H1 (cell line): ENCODE measurements at regions of chr19 and their contacts with region 1.

Region 1: GRCh38 chr19:13093407-13094105 is 9.1 kb downstream of the LYL1 start:
- DNase-seq: peak; percentile 79 to 89
- H3K4me3 ChIP-seq: no peak overlapping the region
- H3K27ac ChIP-seq: no peak overlapping the region
- H3K4me1 ChIP-seq: peaks cover 0 to 18% (median 16%) of the 10 kb centered on the region in 4 experiments; a peak in 5 of 7 replicates
- H3K27me3 ChIP-seq: peaks cover 9 to 71% (median 45%) of the 10 kb centered on the region in 4 experiments
- CTCF ChIP-seq: peak; percentile 96
- EP300 ChIP-seq: no peak
- POLR2A ChIP-seq: no peak
- RAD21 ChIP-seq: peak; percentile 99

Region 2: GRCh38 chr19:12994701-12995595 is 98.6 kb before region 1 on chr19 and contains the start of gene NFIX:
- CTCF ChIA-PET with region 1: interaction called, 18 read pairs
- POLR2A ChIA-PET with region 1: no interaction called
- DNase-seq: no peak
- H3K4me3 ChIP-seq: peak within 1 kb of the TSS; percentile 21 to 50 (median 30); a peak in 7 of 8 replicates
- H3K27ac ChIP-seq: no peak within 1 kb of the TSS
- H3K4me1 ChIP-seq: peaks cover 0 to 12% (median 8%) of the 10 kb centered on the region in 4 experiments; a peak in 5 of 7 replicates
- H3K27me3 ChIP-seq: peaks cover 53 to 89% (median 82%) of the 10 kb centered on the region in 4 experiments
- CTCF ChIP-seq: no peak
- EP300 ChIP-seq: no peak
- POLR2A ChIP-seq: no peak
- RAD21 ChIP-seq: no peak
- total RNA-seq, gene NFIX: 0.20 and 0.27 TPM in 2 replicates

Region 3: DNA sequence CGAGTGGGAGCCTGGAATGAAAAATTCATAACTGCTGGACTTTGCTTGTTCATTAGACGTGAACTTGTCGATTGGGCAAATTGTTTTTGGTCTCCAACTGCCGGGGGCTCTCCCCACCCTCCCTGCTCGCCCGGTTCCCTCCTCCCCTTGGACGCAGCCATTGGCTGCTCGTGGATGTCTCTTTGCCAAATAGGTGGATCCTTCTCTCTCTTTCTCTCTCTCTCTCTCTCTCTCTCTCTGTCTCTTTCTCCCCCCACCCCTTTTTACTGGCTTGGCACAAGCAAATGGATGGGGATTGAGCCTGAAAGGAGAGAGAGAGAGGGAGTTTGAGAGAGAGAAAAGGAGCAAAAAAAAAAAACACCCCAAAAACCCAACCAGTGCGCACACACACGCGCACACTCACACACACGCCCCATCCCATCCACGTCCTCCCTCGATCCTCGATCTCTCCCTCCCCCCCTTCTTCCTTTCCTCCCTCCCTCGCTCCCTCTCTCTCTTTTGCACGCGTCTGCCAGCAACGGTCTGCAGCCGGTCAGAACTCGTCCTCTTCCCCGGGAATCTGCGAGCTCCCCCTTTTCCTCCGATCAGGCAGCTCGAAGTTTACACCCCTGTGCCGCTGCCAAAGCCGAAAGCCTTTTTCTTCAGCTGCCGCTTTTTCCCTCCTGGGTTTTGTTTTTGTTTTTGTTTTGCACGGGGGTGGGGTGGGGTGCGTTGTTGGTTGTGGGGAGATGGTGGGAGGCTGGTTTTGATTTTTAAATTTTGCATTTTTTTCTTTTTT is 70.5 kb before region 1 on chr19:
- CTCF ChIA-PET with region 1: interaction called, 141 read pairs
- POLR2A ChIA-PET with region 1: interaction called, 6 read pairs
- DNase-seq: no peak
- H3K4me3 ChIP-seq: peak overlapping the region in 2 of 4 experiments; percentile 5 to 46; a peak in 3 of 8 replicates
- H3K27ac ChIP-seq: no peak overlapping the region
- H3K4me1 ChIP-seq: peaks cover 11 to 34% (median 29%) of the 10 kb centered on the region in 4 experiments
- H3K27me3 ChIP-seq: peaks cover 81 to 98% (median 96%) of the 10 kb centered on the region in 4 experiments
- CTCF ChIP-seq: no peak
- EP300 ChIP-seq: no peak
- POLR2A ChIP-seq: no peak
- RAD21 ChIP-seq: no peak

Region 4: GRCh38 chr19:13082192-13083007 is 11.2 kb before region 1 on chr19:
- CTCF ChIA-PET with region 1: interaction called, 138 read pairs
- POLR2A ChIA-PET with region 1: interaction called, 8 read pairs
- DNase-seq: no peak
- H3K4me3 ChIP-seq: no peak overlapping the region
- H3K27ac ChIP-seq: no peak overlapping the region
- H3K4me1 ChIP-seq: peaks cover 11 to 29% (median 19%) of the 10 kb centered on the region in 4 experiments
- H3K27me3 ChIP-seq: peaks cover 0 to 16% (median 8%) of the 10 kb centered on the region in 4 experiments; a peak in 3 of 7 replicates
- CTCF ChIP-seq: peak; percentile 22 to 42 (median 36); a peak in 3 of 4 replicates
- EP300 ChIP-seq: no peak
- POLR2A ChIP-seq: no peak
- RAD21 ChIP-seq: peak; percentile 48 to 54

Region 5: GRCh38 chr19:13155472-13156359 is 62.2 kb after region 1 on chr19:
- CTCF ChIA-PET with region 1: no interaction called
- POLR2A ChIA-PET with region 1: interaction called, 13 read pairs
- DNase-seq: peak in 1 of 2 experiments; percentile 89
- H3K4me3 ChIP-seq: peak overlapping the region; percentile 90 to 99 (median 92)
- H3K27ac ChIP-seq: peak overlapping the region; percentile 85
- H3K4me1 ChIP-seq: peaks cover 0 to 8% (median 6%) of the 10 kb centered on the region in 4 experiments; a peak in 6 of 7 replicates
- H3K27me3 ChIP-seq: no peaks in the 10 kb centered on the region; a peak in 1 of 7 replicates
- CTCF ChIP-seq: no peak
- EP300 ChIP-seq: 0 out of 3 replicates have a peak, but pooled peaks of 1 of the 2 experiments have one; percentile 18
- POLR2A ChIP-seq: peak; percentile 12 to 63
- RAD21 ChIP-seq: no peak; a peak in 1 of 4 replicates

Region 6: GRCh38 chr19:13334801-13335481 is 241.4 kb after region 1 on chr19:
- CTCF ChIA-PET with region 1: no interaction called
- POLR2A ChIA-PET with region 1: no interaction called
- DNase-seq: no peak
- H3K4me3 ChIP-seq: no peak overlapping the region
- H3K27ac ChIP-seq: no peak overlapping the region
- H3K4me1 ChIP-seq: no peaks in the 10 kb centered on the region
- H3K27me3 ChIP-seq: no peaks in the 10 kb centered on the region
- CTCF ChIP-seq: peak in 2 of 3 experiments; percentile 22 to 24; a peak in 3 of 4 replicates
- EP300 ChIP-seq: no peak
- POLR2A ChIP-seq: no peak
- RAD21 ChIP-seq: peak; percentile 29 to 36; a peak in 3 of 4 replicates